Panc1 (cell line): ENCODE measurements at regions of chr5 and their contacts with region 1.

Region 1: GRCh38 chr5:73027361-73027760 is 71.5 kb downstream of the FCHO2 start:
- DNase-seq: no peak
- ATAC-seq: no peak
- H3K4me3 ChIP-seq: no peak overlapping the region
- H3K27ac ChIP-seq: no peak overlapping the region
- H3K4me1 ChIP-seq: peaks cover 7% of the 10 kb centered on the region; the same call in 1 of the 2 replicates
- H3K27me3 ChIP-seq: no peaks in the 10 kb centered on the region
- CTCF ChIP-seq: peak; percentile 22; the same call in 1 of the 2 replicates

Region 2: DNA sequence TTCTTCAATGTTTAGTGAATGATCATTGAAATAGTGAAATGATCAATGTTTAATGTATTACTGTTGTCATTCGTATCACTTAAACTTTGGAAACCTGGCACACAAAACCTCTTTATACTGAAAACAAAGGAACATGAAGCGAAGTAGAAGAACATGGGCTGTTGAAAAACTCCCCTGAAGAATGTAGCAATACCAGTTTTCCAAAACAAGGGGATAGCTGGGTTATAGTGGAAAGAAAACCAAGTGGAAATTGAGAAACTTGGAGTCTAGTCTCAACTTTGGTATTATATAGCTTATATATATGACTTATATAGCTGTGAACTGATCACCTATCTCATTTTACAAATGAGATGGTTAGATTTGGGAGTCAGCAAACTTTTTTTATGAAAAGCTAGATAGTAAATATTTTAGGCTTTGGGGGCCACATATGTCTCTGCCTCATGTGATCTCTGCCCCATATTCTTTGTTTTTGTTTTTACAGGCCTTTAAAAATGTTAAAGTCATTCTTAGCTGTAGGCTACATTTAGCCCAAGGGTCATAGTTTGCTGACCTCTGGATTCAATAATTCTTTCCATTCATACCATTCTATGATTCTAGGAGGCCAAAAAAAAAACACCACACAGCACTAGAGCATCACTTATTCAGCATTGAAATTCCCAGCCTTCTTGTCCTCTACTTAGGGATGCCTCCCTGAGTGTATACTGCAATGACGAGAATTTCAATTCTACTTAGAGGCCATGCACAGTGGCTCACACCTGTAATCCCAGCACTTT is 690.4 kb before region 1 on chr5:
- CTCF ChIA-PET with region 1: no interaction called
- POLR2A ChIA-PET with region 1: no interaction called
- in situ Hi-C with region 1: no loop called
- intact Hi-C with region 1: no loop called
- DNase-seq: no peak
- ATAC-seq: no peak
- H3K4me3 ChIP-seq: no peak overlapping the region
- H3K27ac ChIP-seq: no peak overlapping the region
- H3K4me1 ChIP-seq: no peaks in the 10 kb centered on the region
- H3K27me3 ChIP-seq: no peaks in the 10 kb centered on the region
- CTCF ChIP-seq: no peak

Region 3: DNA sequence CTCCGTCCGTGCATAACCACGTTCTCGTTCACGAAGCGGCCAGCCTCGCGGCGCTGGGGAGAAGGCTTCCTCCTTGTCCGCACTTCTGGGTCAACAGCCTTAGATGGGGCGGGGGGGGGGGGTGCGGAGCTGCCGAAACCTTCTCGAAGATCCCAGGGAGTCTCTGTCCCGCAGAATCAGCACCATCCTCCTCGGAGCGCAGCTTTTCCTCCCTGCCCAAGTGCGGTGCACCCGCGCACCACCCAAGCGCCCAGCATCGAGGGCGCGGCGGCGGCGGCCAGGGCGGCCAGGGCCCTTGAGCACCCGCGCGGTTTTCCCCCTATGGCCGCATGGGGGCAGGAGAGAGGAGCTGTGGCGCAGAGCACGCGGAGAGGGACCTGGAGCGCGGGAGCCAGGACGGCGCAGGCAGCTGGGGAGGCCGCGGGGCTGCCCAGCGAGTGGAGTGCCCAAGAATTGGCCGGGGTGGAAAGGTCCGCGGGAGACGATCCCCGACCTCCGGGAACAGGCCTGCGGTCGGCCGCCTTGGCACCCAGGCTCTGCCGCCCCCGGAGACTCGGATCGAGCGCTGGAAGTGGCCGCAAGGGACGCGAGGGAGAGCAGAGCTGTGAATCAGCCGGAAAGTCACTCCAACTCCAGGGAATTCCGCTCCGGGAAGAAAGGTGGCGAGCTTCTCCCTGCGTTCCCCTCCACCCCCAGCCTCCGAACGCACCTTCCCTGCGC is 188.7 kb after region 1 on chr5:
- CTCF ChIA-PET with region 1: no interaction called
- POLR2A ChIA-PET with region 1: no interaction called
- in situ Hi-C with region 1: no loop called
- intact Hi-C with region 1: no loop called
- DNase-seq: peak; percentile 61
- ATAC-seq: peak; percentile 98
- H3K4me3 ChIP-seq: peak overlapping the region; percentile 47 to 67
- H3K27ac ChIP-seq: peak overlapping the region; percentile 84
- H3K4me1 ChIP-seq: peaks cover 10% of the 10 kb centered on the region
- H3K27me3 ChIP-seq: no peaks in the 10 kb centered on the region
- CTCF ChIP-seq: peak; percentile 97

Region 4: GRCh38 chr5:73242718-73243117 is 215.4 kb after region 1 on chr5:
- CTCF ChIA-PET with region 1: no interaction called
- POLR2A ChIA-PET with region 1: interaction called, 11 read pairs
- in situ Hi-C with region 1: no loop called
- intact Hi-C with region 1: no loop called
- DNase-seq: no peak
- ATAC-seq: no peak
- H3K4me3 ChIP-seq: no peak overlapping the region
- H3K27ac ChIP-seq: no peak overlapping the region
- H3K4me1 ChIP-seq: no peaks in the 10 kb centered on the region
- H3K27me3 ChIP-seq: no peaks in the 10 kb centered on the region
- CTCF ChIP-seq: no peak